PC-3 (cell line): ENCODE measurements at regions of chr13 and their contacts with region 1.

Region 1: GRCh38 chr13:32310134-32310706 is 4.9 kb downstream of the ZAR1L start:
- DNase-seq: peak; percentile 65
- ATAC-seq: peak; percentile 85
- H3K4me3 ChIP-seq: peak overlapping the region; percentile 11; the same call in 1 of the 2 replicates
- H3K27ac ChIP-seq: no peak overlapping the region
- H3K4me1 ChIP-seq: peaks cover 5% of the 10 kb centered on the region
- H3K27me3 ChIP-seq: no peaks in the 10 kb centered on the region
- CTCF ChIP-seq: peak; percentile 76

Region 2: DNA sequence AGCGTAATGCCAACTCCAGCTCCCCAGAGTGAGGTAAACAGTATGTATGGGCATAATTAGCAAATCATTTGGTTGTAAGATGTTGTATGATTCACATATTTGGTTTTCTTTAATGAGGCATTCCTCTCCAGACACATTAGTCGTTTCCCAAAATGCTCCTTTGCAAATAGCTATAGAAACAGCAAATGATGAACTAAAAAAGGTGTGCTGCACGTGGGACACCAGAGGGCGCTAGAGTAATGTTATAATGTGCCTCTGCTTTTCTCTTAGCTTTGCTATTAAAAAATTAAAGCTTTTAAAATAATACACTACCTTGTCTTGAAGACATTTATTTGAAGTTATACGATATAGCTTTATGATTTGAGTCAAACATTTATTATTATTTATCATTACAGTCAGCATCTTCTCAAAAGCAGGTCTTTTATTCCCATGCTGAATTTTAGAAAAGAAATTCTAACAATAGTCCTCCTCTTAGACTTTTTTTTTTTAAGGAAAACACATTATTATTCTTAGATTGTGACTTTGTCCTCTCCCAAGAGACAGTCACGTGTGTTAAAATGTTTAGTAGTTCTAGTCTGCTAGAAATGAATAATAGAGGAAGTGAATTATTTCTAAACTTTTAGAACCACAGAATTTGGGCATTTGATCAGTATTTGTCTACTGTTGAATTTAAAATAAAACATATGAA is 400.2 kb before region 1 on chr13:
- CTCF ChIA-PET with region 1: interaction called, 3 read pairs
- POLR2A ChIA-PET with region 1: no interaction called
- intact Hi-C with region 1: loop called (anchors 1 kb)
- DNase-seq: peak; percentile 63
- ATAC-seq: peak; percentile 33; the same call in 1 of the 2 replicates
- H3K4me3 ChIP-seq: no peak overlapping the region
- H3K27ac ChIP-seq: no peak overlapping the region
- H3K4me1 ChIP-seq: peaks cover 11% of the 10 kb centered on the region
- H3K27me3 ChIP-seq: peaks cover 6% of the 10 kb centered on the region; the same call in 1 of the 2 replicates
- CTCF ChIP-seq: peak; percentile 89

Region 3: DNA sequence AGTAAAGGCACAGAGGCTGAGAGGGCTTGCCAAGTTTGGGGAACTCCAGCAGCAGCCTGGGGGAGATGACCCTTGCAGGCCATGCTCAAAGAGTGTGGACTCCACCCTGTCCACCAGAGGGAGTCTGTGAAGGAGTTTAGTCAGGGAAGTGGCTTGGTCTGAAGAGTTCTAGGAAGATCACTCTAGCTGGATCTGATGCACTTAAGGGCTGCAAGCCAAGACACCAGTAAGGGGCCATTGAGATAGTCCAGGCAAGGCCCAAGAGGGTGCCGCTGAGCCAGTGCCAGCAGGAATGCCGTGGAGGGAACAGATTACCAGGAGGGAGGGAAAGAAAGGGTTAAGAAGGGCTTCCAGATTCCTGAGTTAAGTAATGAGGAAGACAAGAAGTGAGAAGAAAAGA is 63.8 kb before region 1 on chr13:
- CTCF ChIA-PET with region 1: no interaction called
- POLR2A ChIA-PET with region 1: no interaction called
- intact Hi-C with region 1: loop called (anchors 1 kb)
- DNase-seq: peak; percentile 74
- ATAC-seq: peak; percentile 93
- H3K4me3 ChIP-seq: no peak overlapping the region
- H3K27ac ChIP-seq: no peak overlapping the region
- H3K4me1 ChIP-seq: no peaks in the 10 kb centered on the region
- H3K27me3 ChIP-seq: no peaks in the 10 kb centered on the region
- CTCF ChIP-seq: peak; percentile 80

Region 4: GRCh38 chr13:32267836-32268439 is 42.3 kb before region 1 on chr13:
- CTCF ChIA-PET with region 1: interaction called, 4 read pairs
- POLR2A ChIA-PET with region 1: no interaction called
- intact Hi-C with region 1: loop called (anchors 5 kb)
- DNase-seq: peak; percentile 65
- ATAC-seq: peak; percentile 62
- H3K4me3 ChIP-seq: no peak overlapping the region
- H3K27ac ChIP-seq: no peak overlapping the region
- H3K4me1 ChIP-seq: peaks cover 4% of the 10 kb centered on the region; the same call in 1 of the 2 replicates
- H3K27me3 ChIP-seq: no peaks in the 10 kb centered on the region
- CTCF ChIP-seq: peak; percentile 78

Region 5: GRCh38 chr13:32334671-32335070 is 24.5 kb after region 1 on chr13:
- CTCF ChIA-PET with region 1: no interaction called
- POLR2A ChIA-PET with region 1: no interaction called
- intact Hi-C with region 1: no loop called
- DNase-seq: no peak
- ATAC-seq: no peak
- H3K4me3 ChIP-seq: no peak overlapping the region
- H3K27ac ChIP-seq: no peak overlapping the region
- H3K4me1 ChIP-seq: no peaks in the 10 kb centered on the region
- H3K27me3 ChIP-seq: no peaks in the 10 kb centered on the region
- CTCF ChIP-seq: no peak